Psoas muscle (tissue), 8 donors: ENCODE measurements at regions of chr17 and their contacts with region 1.

Region 1: DNA sequence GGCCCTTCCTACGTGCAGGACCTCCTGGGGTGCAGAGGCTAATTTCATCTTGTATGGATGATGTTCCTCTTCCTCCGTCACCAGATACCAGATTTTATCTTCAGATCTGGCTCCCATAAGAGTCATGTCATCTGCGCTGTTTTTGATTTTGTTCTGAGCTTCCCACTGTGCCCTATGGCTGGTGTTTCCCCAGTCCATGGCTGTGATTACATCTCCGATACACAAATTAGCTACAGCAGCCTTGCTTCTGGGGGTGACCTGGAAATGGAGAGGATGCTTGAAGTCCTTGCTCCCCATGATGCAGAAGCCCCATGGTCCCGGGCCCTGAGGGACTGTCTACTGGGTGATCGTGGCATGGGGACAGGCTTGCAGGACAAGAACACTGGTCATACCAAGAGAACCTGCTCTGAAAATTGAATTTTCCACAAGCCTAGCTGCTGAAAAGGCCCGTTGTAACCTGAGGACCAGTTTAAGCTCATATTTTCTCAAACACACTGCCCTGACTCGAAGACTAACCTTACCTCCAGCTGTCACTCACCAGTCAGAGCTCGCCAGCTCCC is 69.0 kb downstream of the KCNJ12 start:
- DNase-seq: no peak
- ATAC-seq: no peak
- H3K4me3 ChIP-seq: no peak overlapping the region
- H3K27ac ChIP-seq: no peak overlapping the region
- H3K4me1 ChIP-seq: no peaks in the 10 kb centered on the region
- H3K27me3 ChIP-seq: no peaks in the 10 kb centered on the region
- CTCF ChIP-seq: no peak

Region 2: DNA sequence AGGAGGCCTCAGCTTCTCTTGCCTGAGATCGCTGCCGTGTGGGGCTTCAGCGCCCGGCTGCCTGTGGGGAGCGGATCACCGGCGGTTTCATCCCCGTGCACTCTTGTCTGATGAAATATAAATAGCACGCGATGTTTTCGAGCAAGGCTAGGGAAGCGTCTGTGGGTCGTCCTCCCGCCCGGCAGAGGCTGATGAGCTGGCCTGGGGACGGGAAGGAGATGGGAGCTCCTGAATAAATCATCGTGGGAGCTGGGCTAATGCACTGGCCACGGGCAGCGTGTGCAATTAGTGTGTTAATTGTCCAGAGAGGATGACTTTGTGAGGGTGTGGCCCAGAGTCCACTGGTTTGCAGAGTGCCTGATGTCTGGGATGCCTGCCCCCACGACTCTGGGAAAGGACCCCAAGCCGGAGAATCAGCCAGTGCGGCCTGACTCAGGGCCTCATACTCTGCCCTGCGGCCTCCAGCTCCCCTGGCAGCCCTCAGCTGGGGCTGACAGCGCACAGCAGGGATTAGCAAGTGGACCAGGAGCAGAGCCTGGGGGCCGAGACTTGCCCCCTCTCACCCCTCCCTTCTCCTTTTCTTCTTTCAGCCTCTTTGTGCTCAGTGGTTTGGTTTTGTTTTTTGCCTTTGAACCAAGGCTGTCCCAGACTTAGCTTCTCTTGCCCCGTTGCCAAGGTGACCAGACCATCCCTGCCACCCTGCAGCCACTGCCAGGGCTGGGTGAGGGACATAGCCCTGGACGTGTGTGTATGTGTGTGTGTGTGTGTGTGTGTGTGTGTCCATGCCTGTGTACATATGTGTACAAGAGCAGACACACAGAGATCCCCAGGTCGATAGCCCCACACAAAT is 47.6 kb before region 1 on chr17:
- intact Hi-C with region 1: loop called in 1 of 2 experiments (anchors 10 kb)
- DNase-seq: peak in 1 of 2 donors; percentile 43
- ATAC-seq: peak in 3 of 4 donors; percentile 21 to 54 (median 34)
- H3K4me3 ChIP-seq: no peak overlapping the region
- H3K27ac ChIP-seq: peak overlapping the region; percentile 41
- H3K4me1 ChIP-seq: peaks cover 11% of the 10 kb centered on the region
- H3K27me3 ChIP-seq: no peaks in the 10 kb centered on the region
- CTCF ChIP-seq: no peak